ENCODE measurements at regions of chr6 and their contacts with region 1.

Region 1: DNA sequence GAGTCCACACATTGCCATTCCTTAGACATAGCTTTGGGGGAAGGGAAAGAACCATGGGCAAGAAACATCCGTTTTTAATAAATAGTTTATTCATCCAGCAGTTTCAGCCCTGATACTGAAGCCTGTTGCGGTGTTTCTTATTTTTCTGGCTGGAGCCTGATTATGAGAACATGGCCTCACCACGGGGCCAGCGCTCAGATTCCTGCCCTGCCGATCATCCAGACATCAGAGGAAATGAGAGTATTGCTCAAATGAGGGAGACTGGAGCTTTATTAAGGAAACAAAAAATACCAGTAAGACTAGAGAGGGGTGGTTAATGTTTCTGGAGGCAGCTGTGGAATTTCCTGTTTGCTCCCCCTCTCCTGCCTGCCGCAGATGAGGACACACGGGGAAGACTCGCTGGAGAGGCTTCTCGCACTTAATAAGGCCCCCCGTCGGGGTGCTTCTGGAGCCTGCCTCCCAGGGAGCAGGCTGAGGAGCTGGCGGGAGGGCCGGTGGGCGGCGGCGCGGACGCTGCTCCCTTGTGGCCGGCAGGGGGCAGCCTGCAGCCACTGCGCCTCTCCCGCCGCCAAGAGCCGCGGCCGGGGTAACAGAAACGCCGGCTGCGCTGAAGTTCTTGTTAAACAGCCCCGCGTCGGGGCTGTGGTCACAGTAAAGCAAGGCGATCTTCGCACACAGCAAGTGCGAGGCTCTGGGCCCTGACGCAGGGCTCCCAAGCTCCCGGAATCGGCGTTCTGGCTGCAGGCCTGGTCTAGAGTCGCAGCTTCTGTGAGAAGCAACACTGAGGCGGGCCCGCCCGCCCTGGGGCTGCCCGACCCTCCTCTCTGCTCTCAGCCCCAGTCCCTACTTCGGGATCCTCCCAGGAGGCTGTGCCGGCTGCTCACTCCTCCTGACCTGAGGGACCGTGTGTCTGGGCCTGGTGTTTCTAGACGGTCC is 17.5 kb downstream of the LEMD2 start:
- H3K4me3 ChIP-seq: no peak overlapping the region
- H3K27ac ChIP-seq: no peak overlapping the region
- H3K4me1 ChIP-seq: peaks cover 5% of the 10 kb centered on the region
- CTCF ChIP-seq: peak; percentile 91

Region 2: GRCh38 chr6:33682341-33682740 is 89.1 kb before region 1 on chr6:
- CTCF ChIA-PET with region 1: no interaction called
- POLR2A ChIA-PET with region 1: no interaction called
- H3K4me3 ChIP-seq: no peak overlapping the region
- H3K27ac ChIP-seq: no peak overlapping the region
- H3K4me1 ChIP-seq: no peaks in the 10 kb centered on the region
- CTCF ChIP-seq: no peak

Region 3: GRCh38 chr6:33754222-33754621 is 17.2 kb before region 1 on chr6:
- CTCF ChIA-PET with region 1: interaction called, 149 read pairs
- POLR2A ChIA-PET with region 1: interaction called, 4 read pairs
- H3K4me3 ChIP-seq: no peak overlapping the region
- H3K27ac ChIP-seq: no peak overlapping the region
- H3K4me1 ChIP-seq: peaks cover 24% of the 10 kb centered on the region
- CTCF ChIP-seq: no peak

Region 4: DNA sequence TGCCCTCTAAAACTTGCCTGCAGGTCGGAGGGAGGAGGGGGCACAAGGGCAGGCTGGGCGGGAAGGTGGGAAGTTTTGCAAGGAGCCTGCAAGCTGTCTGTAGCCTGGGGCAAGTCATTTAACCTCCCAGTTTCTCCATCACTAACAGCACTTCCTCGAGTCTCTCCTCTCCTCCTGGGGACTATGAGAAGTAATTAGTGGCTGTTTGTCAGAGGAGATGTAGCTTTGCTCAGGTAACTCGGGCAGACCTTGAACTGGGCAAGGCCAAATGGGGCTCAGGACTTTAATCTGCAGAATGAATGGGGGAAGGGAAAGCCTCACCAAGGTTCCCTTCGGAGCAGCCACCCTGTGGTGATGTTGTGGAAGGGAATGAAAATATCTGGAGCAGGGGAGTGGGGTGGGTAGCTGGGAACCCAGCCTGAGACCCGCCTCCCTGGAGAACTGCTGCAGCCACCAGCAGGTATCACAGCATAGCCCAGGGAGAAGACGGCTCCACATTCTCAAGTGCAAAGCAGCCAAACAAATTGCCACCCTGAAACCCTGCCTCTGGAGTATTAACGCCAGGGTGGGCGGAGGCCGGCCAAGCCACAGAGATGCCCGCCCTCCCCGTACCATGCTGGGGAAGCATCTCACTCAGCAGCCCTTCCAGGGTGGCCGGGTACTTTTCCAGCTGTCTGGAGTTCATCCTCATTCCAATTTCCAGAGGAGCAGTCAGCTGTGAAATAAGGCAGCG is 23.6 kb after region 1 on chr6:
- CTCF ChIA-PET with region 1: interaction called, 15 read pairs
- POLR2A ChIA-PET with region 1: interaction called, 3 read pairs
- H3K4me3 ChIP-seq: no peak overlapping the region
- H3K27ac ChIP-seq: no peak overlapping the region
- H3K4me1 ChIP-seq: peaks cover 5% of the 10 kb centered on the region
- CTCF ChIP-seq: no peak

Region 5: GRCh38 chr6:33834401-33835392 is 63.3 kb after region 1 on chr6:
- CTCF ChIA-PET with region 1: interaction called, 12 read pairs
- POLR2A ChIA-PET with region 1: no interaction called
- H3K4me3 ChIP-seq: no peak overlapping the region
- H3K27ac ChIP-seq: no peak overlapping the region
- H3K4me1 ChIP-seq: no peaks in the 10 kb centered on the region
- CTCF ChIP-seq: no peak

Region 6: DNA sequence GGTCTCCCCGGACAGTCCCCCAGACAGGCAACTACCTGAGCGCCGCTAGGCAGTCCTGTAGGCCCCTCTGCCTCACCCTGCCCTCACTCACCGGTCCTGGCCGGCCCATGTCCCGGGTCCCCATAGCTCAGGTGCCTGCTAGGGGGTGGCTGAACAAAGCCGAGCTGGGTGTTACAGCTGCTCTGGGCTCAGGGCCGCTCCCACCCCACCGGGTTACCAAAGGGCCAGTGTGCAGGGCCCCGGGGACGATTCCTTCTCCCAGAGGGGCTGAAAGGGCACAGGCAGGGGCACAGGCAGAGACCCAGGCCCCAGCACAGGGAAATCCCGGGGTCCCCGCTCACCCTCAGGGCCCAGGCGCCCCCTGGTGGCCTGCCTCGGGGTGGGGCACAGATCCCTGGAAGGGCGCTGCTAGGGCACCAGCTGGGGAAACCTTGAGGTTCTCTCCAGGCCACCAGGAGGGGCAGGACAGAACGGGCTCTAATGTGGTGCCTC is 256.1 kb after region 1 on chr6:
- CTCF ChIA-PET with region 1: interaction called, 80 read pairs
- POLR2A ChIA-PET with region 1: interaction called, 4 read pairs
- H3K4me3 ChIP-seq: no peak overlapping the region
- H3K27ac ChIP-seq: no peak overlapping the region
- H3K4me1 ChIP-seq: no peaks in the 10 kb centered on the region
- CTCF ChIP-seq: peak; percentile 54

Region 7: DNA sequence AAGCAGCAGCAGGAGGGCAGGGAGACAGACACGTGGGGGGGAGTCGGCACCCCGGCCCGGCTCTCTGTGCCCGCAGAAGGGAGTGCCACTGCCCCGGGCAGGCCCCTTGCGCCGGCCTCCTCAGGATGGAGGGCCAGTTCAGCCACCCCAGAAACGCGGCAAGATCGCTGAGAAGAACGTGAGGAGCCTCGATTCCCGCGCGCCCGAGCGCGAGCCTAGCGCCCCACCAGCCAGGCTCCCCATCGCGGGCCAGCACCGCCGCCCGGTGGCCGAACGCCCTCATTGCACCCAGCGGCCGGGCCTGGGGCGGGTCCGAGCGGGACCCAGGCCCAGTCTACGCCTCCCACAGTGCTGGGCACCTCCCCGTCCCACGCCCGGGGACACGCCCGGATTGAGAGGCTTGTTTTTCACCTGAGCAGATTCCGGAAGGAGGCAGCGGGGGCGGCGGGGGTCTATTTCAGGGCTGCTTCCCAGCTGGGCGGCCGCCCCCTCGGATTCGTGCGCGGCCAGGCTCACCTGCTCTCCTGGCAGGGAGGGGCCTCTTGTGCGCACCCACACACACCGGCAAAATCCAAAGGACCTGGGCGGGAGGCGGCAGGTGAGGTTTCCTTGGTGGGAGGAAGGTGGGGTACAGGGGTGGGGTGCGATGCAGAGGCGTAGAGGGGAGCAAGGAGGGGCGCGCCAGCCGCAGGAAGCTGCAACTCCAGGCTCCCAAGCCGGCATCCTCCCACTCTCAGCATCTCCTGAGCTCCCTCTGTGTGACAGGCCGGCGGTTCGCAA is 383.4 kb after region 1 on chr6:
- CTCF ChIA-PET with region 1: interaction called, 90 read pairs
- POLR2A ChIA-PET with region 1: no interaction called
- H3K4me3 ChIP-seq: peak overlapping the region; percentile 20
- H3K27ac ChIP-seq: no peak overlapping the region
- H3K4me1 ChIP-seq: no peaks in the 10 kb centered on the region
- CTCF ChIP-seq: peak; percentile 95

Measured in HEK293 (cell line).